Activated naive CD4-positive, alpha-beta T cell treated with anti-CD3 and anti-CD28 coated beads for 36 hours (primary cell): ENCODE measurements at regions of chr6 and their contacts with region 1.

Region 1: DNA sequence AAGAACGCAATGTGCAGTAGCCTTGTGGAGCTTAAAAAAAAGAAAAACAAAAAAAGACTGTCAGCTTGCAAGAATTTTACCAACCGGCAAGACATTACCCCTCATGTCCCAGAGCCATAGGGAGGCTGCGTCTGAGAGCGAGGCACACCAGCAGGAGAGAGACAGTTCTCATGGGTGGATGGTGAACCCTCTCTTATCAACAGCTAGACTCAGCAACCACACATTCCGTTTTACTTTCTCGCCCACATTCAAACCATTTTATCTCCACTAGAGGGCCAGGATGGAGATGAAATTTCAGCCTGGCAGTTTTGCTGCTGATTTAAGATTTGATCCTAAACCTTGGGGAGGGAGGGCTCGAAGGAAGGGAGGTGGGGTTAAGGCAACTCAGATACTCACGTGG is 247.0 kb downstream of the ATXN1 start:
- DNase-seq: peak; percentile 48
- H3K4me3 Mint-ChIP-seq: no peak overlapping the region
- H3K27ac Mint-ChIP-seq: no peak overlapping the region
- H3K4me1 Mint-ChIP-seq: peaks cover 53% of the 10 kb centered on the region
- H3K27me3 Mint-ChIP-seq: no peaks in the 10 kb centered on the region

Region 2: GRCh38 chr6:16409531-16410441 is 104.5 kb before region 1 on chr6:
- CTCF ChIA-PET with region 1: interaction called, 4 read pairs
- intact Hi-C with region 1: loop called (anchors 2 kb)
- DNase-seq: peak; percentile 75
- H3K4me3 Mint-ChIP-seq: peak overlapping the region; percentile 30
- H3K27ac Mint-ChIP-seq: peak overlapping the region; percentile 53
- H3K4me1 Mint-ChIP-seq: peaks cover 31% of the 10 kb centered on the region
- H3K27me3 Mint-ChIP-seq: no peaks in the 10 kb centered on the region

Region 3: GRCh38 chr6:16471222-16471909 is 42.9 kb before region 1 on chr6:
- CTCF ChIA-PET with region 1: interaction called, 13 read pairs
- intact Hi-C with region 1: loop called (anchors 1 kb)
- DNase-seq: no peak
- H3K4me3 Mint-ChIP-seq: no peak overlapping the region
- H3K27ac Mint-ChIP-seq: peak overlapping the region; percentile 68
- H3K4me1 Mint-ChIP-seq: peaks cover 60% of the 10 kb centered on the region
- H3K27me3 Mint-ChIP-seq: no peaks in the 10 kb centered on the region

Region 4: GRCh38 chr6:16503970-16504415 is 10.3 kb before region 1 on chr6:
- CTCF ChIA-PET with region 1: interaction called, 11 read pairs
- intact Hi-C with region 1: no loop called
- DNase-seq: no peak
- H3K4me3 Mint-ChIP-seq: no peak overlapping the region
- H3K27ac Mint-ChIP-seq: no peak overlapping the region
- H3K4me1 Mint-ChIP-seq: peaks cover 26% of the 10 kb centered on the region
- H3K27me3 Mint-ChIP-seq: no peaks in the 10 kb centered on the region

Region 5: GRCh38 chr6:16576451-16577368 is 62.5 kb after region 1 on chr6:
- CTCF ChIA-PET with region 1: no interaction called
- intact Hi-C with region 1: no loop called
- DNase-seq: no peak
- H3K4me3 Mint-ChIP-seq: no peak overlapping the region
- H3K27ac Mint-ChIP-seq: no peak overlapping the region
- H3K4me1 Mint-ChIP-seq: peaks cover 6% of the 10 kb centered on the region
- H3K27me3 Mint-ChIP-seq: no peaks in the 10 kb centered on the region

Region 6: DNA sequence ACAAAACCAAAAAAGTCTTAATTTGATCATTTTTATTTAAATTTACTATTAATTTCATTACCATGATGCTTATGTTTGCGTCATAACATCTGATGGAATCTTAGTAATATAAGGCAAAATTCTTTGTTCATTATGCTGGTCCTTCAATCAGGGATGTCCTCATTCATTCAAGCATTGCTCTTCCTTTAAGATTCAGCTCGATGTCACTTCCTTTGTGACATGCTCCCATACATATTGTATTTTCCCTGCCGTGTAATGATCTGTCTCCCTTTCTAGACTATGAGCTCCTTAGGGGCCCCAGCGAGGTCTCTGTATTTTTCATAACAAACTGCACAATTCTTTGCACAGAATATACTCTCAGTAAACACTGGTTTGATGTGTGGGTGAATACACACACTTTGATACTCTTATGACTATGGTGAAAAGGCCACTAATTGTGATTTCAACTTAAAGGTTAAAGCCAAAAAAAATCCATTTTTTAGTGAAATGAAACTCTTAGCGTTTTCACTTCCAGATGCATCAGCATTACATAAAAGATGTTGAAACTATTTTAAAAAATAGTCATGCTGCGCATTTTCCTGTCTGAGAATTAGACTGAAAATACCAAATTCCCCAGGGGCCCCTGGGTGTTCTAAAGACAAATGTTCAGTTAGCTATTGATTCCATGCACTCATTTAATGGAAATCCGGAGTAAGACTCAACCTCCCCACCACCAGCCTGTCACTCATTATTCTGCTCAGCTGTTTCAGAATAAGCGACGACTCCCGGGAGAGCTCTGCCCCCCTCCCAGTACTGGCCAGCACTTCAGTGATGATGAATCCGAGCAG is 77.4 kb after region 1 on chr6:
- CTCF ChIA-PET with region 1: interaction called, 5 read pairs
- intact Hi-C with region 1: loop called (anchors 5 kb)
- DNase-seq: peak; percentile 46
- H3K4me3 Mint-ChIP-seq: no peak overlapping the region
- H3K27ac Mint-ChIP-seq: peak overlapping the region; percentile 48
- H3K4me1 Mint-ChIP-seq: peaks cover 18% of the 10 kb centered on the region
- H3K27me3 Mint-ChIP-seq: no peaks in the 10 kb centered on the region

Region 7: GRCh38 chr6:16770701-16771569 is 256.7 kb after region 1 on chr6:
- CTCF ChIA-PET with region 1: interaction called, 12 read pairs
- intact Hi-C with region 1: no loop called
- DNase-seq: peak; percentile 82
- H3K4me3 Mint-ChIP-seq: no peak overlapping the region
- H3K27ac Mint-ChIP-seq: no peak overlapping the region
- H3K4me1 Mint-ChIP-seq: peaks cover 46% of the 10 kb centered on the region
- H3K27me3 Mint-ChIP-seq: no peaks in the 10 kb centered on the region

Region 8: GRCh38 chr6:16901782-16902181 is 387.5 kb after region 1 on chr6:
- CTCF ChIA-PET with region 1: no interaction called
- intact Hi-C with region 1: no loop called
- DNase-seq: no peak
- H3K4me3 Mint-ChIP-seq: no peak overlapping the region
- H3K27ac Mint-ChIP-seq: no peak overlapping the region
- H3K4me1 Mint-ChIP-seq: no peaks in the 10 kb centered on the region
- H3K27me3 Mint-ChIP-seq: peaks cover 40% of the 10 kb centered on the region

Region 9: GRCh38 chr6:17086469-17086868 is 572.2 kb after region 1 on chr6:
- CTCF ChIA-PET with region 1: no interaction called
- intact Hi-C with region 1: loop called (anchors 10 kb)
- DNase-seq: peak; percentile 46
- H3K4me3 Mint-ChIP-seq: no peak overlapping the region
- H3K27ac Mint-ChIP-seq: no peak overlapping the region
- H3K4me1 Mint-ChIP-seq: no peaks in the 10 kb centered on the region
- H3K27me3 Mint-ChIP-seq: peaks cover 8% of the 10 kb centered on the region